GM13976 (cell line): ENCODE measurements at regions of chr16 and their contacts with region 1.

Region 1: GRCh38 chr16:56866943-56867830 is 2.2 kb downstream of the SLC12A3 start:
- DNase-seq: peak; percentile 81
- CTCF ChIP-seq: peak; percentile 46

Region 2: DNA sequence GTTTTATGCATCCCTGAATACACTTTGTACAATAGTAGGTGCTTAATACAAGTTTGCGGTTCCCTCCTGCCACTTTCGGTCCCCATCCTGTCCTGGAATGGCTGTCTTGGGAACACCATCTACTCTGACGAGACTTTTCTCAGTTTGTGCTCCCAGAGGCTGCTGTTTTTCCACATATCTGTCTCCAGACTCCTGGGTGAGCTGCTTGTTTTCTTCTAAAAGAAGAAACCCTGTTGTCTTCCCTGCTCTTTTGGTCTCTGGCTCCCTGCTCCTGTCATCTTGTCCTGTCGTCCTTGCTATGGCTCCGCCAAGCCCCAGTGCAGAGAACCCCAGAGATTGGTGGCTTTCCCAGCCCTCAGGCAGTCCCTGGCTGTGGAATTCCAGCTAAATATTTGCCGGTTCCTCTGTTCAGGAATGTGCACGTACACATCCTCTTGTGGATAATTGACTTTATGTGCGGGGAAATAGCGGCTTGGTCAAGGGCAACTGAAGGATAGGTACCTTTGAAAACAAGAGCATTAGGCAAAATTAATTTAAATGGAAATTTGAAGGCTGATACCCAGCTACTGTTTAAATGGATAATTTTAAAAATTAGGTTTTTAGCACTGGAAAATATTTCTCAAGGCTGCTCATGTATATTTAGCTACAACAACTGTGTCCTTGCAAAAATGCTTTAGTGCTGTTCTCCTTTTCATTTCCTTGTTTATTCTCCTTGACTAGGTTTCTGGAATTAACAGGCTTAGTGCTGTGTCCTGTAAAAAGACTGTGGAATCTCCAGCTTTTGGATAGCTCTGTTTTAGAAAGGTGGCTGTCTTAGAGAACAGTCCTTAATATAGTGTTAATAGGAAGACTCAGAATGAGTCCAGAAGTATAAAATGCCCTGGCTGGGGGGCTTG is 52.4 kb before region 1 on chr16:
- in situ Hi-C with region 1: no loop called
- DNase-seq: no peak
- CTCF ChIP-seq: no peak

Region 3: GRCh38 chr16:56950881-56951771 is 83.9 kb after region 1 on chr16:
- in situ Hi-C with region 1: loop called (anchors 5 kb)
- DNase-seq: peak; percentile 79
- CTCF ChIP-seq: peak; percentile 50

Region 4: DNA sequence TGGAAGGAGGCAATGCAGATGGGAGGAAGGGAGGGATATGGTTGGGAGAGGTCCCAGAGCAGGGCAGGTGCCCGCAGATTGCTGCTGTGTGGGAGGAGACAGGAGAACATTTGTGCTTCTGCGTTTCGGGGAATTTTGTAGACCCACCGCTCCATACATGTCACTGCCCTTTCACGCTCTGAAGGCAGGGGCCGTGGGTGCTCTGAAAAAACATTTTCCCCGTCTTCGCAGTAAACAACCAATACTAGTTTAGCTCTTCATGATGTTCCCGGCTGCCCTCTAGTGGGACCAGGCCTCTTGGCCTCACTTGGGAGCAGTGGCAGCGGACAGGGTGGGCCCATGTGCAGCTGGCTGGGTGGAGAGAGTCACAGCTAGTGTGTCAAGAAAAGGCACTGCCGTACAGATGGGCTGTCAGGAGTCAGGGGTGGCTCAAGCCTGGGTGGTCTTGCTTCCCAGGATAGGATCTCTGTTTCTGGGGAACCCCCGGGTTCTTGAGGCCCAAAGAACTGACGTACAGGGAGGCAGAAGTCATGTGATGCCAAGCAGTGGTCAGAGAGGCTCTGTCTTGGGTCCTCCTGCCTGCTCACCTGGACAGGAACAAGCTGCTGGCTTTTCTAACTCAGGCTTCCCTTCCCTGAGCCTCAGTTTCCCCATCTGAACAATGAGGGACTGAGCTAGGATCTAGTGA is 178.7 kb after region 1 on chr16:
- in situ Hi-C with region 1: loop called (anchors 10 kb)
- DNase-seq: peak; percentile 83
- CTCF ChIP-seq: peak; percentile 81